Activated CD4-positive, alpha-beta T cell treated with anti-CD3 and anti-CD28 coated beads for 36 hours (primary cell): ENCODE measurements at regions of chr22 and their contacts with region 1.

Region 1: DNA sequence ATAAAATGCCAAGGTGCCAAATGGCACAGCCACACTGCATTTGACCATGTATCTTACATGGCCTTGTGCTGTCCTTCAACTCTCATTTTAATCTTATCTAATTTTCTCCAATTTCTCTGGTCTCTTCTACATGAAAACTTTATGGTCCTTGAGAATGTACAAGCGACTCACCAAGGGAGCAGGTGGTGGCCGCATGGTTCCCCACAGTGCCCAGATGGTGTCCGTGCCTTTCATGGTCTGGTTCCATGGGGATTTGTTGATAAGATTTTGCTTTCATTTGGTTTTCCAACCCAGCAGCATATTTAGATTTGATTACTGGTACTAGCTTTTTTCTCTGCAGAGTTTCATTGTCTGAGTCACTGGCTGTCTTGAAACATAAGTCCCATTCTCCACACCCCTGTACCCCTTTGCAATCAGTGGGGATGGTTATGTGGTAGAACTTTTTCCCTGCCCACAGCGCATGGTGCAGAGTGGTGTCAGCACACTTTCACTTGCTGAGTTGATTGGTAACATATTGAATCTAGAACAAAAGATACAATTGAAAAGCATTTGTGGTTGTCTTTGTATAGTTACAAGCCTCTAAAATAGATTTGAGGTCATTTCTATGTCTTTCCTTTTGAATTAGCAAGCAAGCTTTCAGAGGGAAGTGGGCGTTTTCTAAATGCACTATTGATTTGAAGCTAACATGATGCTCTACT is 24.1 kb downstream of the ZNRF3 start:
- DNase-seq: peak; percentile 87
- ATAC-seq: peak; percentile 92
- H3K4me3 Mint-ChIP-seq: no peak overlapping the region
- H3K27ac Mint-ChIP-seq: peak overlapping the region; percentile 86
- H3K4me1 Mint-ChIP-seq: peaks cover 44% of the 10 kb centered on the region
- H3K27me3 Mint-ChIP-seq: peaks cover 36% of the 10 kb centered on the region

Region 2: DNA sequence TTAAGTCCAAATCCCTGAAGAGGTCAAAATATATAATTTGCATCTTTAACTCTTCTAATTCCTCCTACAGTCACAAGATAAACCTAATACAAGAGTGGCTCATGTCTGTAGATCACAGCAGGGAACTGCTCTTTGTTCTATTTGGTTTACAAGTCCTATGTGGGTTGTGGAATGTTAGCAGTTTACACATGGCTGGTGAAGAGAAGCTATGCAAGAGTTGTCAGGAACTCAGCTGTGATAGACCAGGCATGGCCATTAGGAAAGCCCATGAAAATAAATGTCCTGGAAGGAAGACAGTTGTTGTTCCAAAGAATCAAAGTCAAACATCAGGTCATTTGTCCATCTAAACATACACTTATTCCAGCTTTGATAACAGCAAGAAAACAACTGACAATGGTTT is 676.0 kb before region 1 on chr22:
- CTCF ChIA-PET with region 1: no interaction called
- POLR2A ChIA-PET with region 1: no interaction called
- intact Hi-C with region 1: no loop called
- DNase-seq: no peak
- ATAC-seq: no peak
- H3K4me3 Mint-ChIP-seq: no peak overlapping the region
- H3K27ac Mint-ChIP-seq: no peak overlapping the region
- H3K4me1 Mint-ChIP-seq: no peaks in the 10 kb centered on the region
- H3K27me3 Mint-ChIP-seq: peaks cover 2% of the 10 kb centered on the region

Region 3: GRCh38 chr22:28741758-28742561 is 165.5 kb before region 1 on chr22 and contains the starts of genes CHEK2 and HSCB:
- CTCF ChIA-PET with region 1: no interaction called
- POLR2A ChIA-PET with region 1: no interaction called
- intact Hi-C with region 1: loop called in 1 of 2 experiments (anchors 2 kb)
- DNase-seq: peak; percentile 99
- ATAC-seq: peak; percentile 93
- H3K4me3 Mint-ChIP-seq: peak within 1 kb of the TSS; percentile 81
- H3K27ac Mint-ChIP-seq: peak within 1 kb of the TSS; percentile 83
- H3K4me1 Mint-ChIP-seq: peaks cover 32% of the 10 kb centered on the region
- H3K27me3 Mint-ChIP-seq: no peaks in the 10 kb centered on the region
- total RNA-seq, gene CHEK2: 37.5 to 41.3 TPM
- total RNA-seq, gene HSCB: 16.5 to 18.5 TPM

Region 4: DNA sequence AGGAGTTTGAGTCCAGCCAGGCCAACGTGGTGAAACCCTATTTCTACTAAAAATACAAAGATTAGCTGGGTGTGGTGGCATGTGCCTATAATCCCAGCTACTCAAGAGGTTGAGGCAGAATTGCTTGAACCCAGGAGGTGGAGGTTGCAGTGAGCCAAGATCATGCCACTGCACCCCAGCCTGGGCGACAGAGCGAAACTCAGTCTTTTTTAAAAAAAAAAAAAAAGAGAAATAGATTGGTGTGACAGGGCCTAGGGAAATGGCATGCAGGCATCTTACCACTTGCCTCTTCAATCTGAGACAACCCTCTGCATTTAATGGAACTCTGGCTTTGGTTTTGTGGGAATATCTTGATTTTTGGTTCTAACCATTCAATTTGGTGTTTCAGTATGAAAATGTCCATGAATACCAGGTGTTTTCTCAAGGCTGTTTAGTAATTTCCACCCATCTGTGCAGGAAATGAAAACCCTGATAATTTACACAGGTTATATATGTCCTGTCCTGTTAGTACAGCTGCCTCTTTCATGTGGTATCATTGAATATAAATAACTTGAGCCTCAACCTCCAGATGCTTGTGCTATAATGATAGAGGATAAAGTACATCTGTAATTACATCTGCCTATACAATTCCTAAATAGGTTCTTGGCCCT is 115.5 kb before region 1 on chr22:
- CTCF ChIA-PET with region 1: no interaction called
- POLR2A ChIA-PET with region 1: no interaction called
- intact Hi-C with region 1: loop called (anchors 1 to 10 kb)
- DNase-seq: no peak
- ATAC-seq: peak; percentile 11
- H3K4me3 Mint-ChIP-seq: no peak overlapping the region
- H3K27ac Mint-ChIP-seq: no peak overlapping the region
- H3K4me1 Mint-ChIP-seq: peaks cover 45% of the 10 kb centered on the region
- H3K27me3 Mint-ChIP-seq: no peaks in the 10 kb centered on the region

Region 5: GRCh38 chr22:28843633-28844032 is 63.8 kb before region 1 on chr22:
- CTCF ChIA-PET with region 1: no interaction called
- POLR2A ChIA-PET with region 1: no interaction called
- intact Hi-C with region 1: no loop called
- DNase-seq: no peak
- ATAC-seq: no peak
- H3K4me3 Mint-ChIP-seq: no peak overlapping the region
- H3K27ac Mint-ChIP-seq: no peak overlapping the region
- H3K4me1 Mint-ChIP-seq: no peaks in the 10 kb centered on the region
- H3K27me3 Mint-ChIP-seq: no peaks in the 10 kb centered on the region

Region 6: GRCh38 chr22:28882878-28883656 is 24.4 kb before region 1 on chr22 and contains the start of gene ZNRF3:
- CTCF ChIA-PET with region 1: interaction called, 5 read pairs
- POLR2A ChIA-PET with region 1: interaction called, 3 read pairs
- intact Hi-C with region 1: loop called in 1 of 2 experiments (anchors 1 kb)
- DNase-seq: peak; percentile 96
- ATAC-seq: peak; percentile 91
- H3K4me3 Mint-ChIP-seq: peak within 1 kb of the TSS; percentile 75
- H3K27ac Mint-ChIP-seq: peak within 1 kb of the TSS; percentile 83
- H3K4me1 Mint-ChIP-seq: peaks cover 18% of the 10 kb centered on the region
- H3K27me3 Mint-ChIP-seq: peaks cover 26% of the 10 kb centered on the region
- total RNA-seq, gene ZNRF3: 2.3 TPM

Region 7: DNA sequence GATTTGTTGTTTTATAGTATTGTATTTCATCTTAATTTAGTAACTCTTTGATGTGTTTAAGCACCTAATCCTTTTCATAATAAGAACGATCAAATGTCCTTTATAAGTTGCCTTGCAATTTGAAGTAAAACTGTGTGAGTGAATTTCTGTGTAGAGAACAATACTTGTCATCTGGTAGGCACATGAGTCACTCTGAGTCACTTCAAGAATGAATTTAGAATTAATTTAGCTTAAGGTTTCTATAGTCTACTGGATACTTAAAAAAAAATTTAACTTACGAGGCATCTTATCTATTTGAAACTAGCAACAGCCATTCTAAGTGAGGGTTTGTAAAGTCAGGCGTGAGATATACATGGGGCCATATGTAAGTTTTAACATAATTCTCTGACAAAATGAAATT is 69.1 kb after region 1 on chr22:
- CTCF ChIA-PET with region 1: interaction called, 3 read pairs
- POLR2A ChIA-PET with region 1: interaction called, 4 read pairs
- intact Hi-C with region 1: loop called in 1 of 2 experiments (anchors 1 kb)
- DNase-seq: no peak
- ATAC-seq: peak; percentile 73
- H3K4me3 Mint-ChIP-seq: no peak overlapping the region
- H3K27ac Mint-ChIP-seq: no peak overlapping the region
- H3K4me1 Mint-ChIP-seq: peaks cover 17% of the 10 kb centered on the region
- H3K27me3 Mint-ChIP-seq: peaks cover 38% of the 10 kb centered on the region

Region 8: GRCh38 chr22:29167032-29167911 is 259.8 kb after region 1 on chr22:
- CTCF ChIA-PET with region 1: no interaction called
- POLR2A ChIA-PET with region 1: no interaction called
- intact Hi-C with region 1: loop called in 1 of 2 experiments (anchors 1 kb)
- DNase-seq: peak; percentile 83
- ATAC-seq: peak; percentile 94
- H3K4me3 Mint-ChIP-seq: peak overlapping the region; percentile 1
- H3K27ac Mint-ChIP-seq: peak overlapping the region; percentile 82
- H3K4me1 Mint-ChIP-seq: peaks cover 18% of the 10 kb centered on the region
- H3K27me3 Mint-ChIP-seq: peaks cover 14% of the 10 kb centered on the region

Region 9: DNA sequence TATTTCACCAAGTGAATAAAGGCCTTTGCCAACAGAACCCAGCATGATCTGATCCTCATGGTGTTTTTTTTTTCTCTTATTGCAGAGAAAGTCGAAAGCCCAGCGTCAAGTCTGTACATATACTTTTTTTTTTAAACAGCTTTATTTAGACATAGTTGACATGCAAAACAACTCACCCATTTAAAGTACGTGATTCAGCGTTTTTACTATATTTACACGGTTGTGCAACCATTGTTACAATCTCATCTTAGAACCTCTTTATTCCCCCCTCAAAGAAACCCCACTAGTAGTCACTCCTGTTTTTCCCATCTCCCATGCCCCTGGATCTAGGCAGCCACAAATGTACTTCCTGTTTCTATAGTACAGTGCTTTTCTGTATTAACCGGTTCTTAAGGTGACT is 501.5 kb after region 1 on chr22:
- CTCF ChIA-PET with region 1: no interaction called
- POLR2A ChIA-PET with region 1: interaction called, 11 read pairs
- intact Hi-C with region 1: no loop called
- DNase-seq: no peak
- ATAC-seq: no peak
- H3K4me3 Mint-ChIP-seq: no peak overlapping the region
- H3K27ac Mint-ChIP-seq: no peak overlapping the region
- H3K4me1 Mint-ChIP-seq: peaks cover 2% of the 10 kb centered on the region
- H3K27me3 Mint-ChIP-seq: no peaks in the 10 kb centered on the region